CD8-positive, alpha-beta T cell (primary cell): ENCODE measurements at regions of chr9 and their contacts with region 1.

Region 1: DNA sequence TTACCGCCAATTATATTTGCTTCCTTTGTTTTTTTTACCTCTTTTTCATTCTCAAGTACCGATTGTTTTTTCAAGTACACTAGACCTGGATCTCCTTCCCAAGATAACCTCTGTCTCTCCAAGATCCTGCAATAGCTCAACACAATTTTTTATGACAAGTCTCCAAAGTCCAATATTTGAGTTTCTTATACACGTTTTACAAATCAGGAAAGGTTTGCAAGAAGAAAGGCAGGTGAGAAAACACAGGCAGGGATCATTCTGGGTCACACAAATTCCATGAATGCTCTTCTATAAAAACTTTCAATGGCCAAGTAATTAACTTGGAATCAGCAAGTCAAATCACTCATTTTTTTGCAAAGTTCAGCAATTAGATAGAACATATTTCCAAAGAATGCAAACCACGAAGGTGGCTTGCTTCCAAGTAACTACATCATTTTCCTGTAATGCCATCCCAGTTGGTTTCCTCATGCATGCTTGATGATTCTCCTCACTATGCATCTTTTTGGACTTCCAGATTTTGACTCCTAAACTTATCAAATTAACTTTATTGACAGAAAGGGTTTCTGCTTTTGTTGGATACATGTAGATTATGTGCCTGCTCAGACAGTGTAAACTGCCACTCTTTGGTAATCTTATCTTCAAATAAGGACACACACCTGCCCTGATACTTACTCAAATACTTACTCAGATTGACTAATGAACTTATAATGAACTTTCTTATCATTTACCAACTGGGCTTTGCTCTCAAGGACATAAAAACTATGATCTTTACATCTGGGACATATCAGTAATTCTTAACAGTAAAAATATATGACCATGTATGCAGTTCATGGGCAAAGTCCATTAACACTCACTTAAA is 24.7 kb upstream of the IFNE start:
- DNase-seq: no peak
- ATAC-seq: no peak
- H3K4me3 ChIP-seq: no peak overlapping the region
- H3K4me3 Mint-ChIP-seq: no peak overlapping the region
- H3K27ac ChIP-seq: no peak overlapping the region
- H3K27ac Mint-ChIP-seq: no peak overlapping the region
- H3K4me1 ChIP-seq: peaks cover 14% of the 10 kb centered on the region
- H3K4me1 Mint-ChIP-seq: peaks cover 16% of the 10 kb centered on the region
- H3K27me3 ChIP-seq: no peaks in the 10 kb centered on the region
- H3K27me3 Mint-ChIP-seq: no peaks in the 10 kb centered on the region
- CTCF ChIP-seq: no peak

Region 2: GRCh38 chr9:21473236-21473635 is 33.6 kb before region 1 on chr9:
- CTCF ChIA-PET with region 1: no interaction called
- POLR2A ChIA-PET with region 1: no interaction called
- intact Hi-C with region 1: loop called in 1 of 2 experiments (anchors 5 kb)
- DNase-seq: no peak
- ATAC-seq: no peak
- H3K4me3 ChIP-seq: no peak overlapping the region
- H3K4me3 Mint-ChIP-seq: no peak overlapping the region
- H3K27ac ChIP-seq: no peak overlapping the region
- H3K27ac Mint-ChIP-seq: no peak overlapping the region
- H3K4me1 ChIP-seq: no peaks in the 10 kb centered on the region
- H3K4me1 Mint-ChIP-seq: no peaks in the 10 kb centered on the region
- H3K27me3 ChIP-seq: no peaks in the 10 kb centered on the region
- H3K27me3 Mint-ChIP-seq: peaks cover 8% of the 10 kb centered on the region
- CTCF ChIP-seq: no peak

Region 3: GRCh38 chr9:21715408-21715807 is 208.6 kb after region 1 on chr9:
- CTCF ChIA-PET with region 1: no interaction called
- POLR2A ChIA-PET with region 1: no interaction called
- intact Hi-C with region 1: no loop called
- DNase-seq: no peak
- ATAC-seq: no peak
- H3K4me3 ChIP-seq: no peak overlapping the region
- H3K4me3 Mint-ChIP-seq: no peak overlapping the region
- H3K27ac ChIP-seq: no peak overlapping the region
- H3K27ac Mint-ChIP-seq: no peak overlapping the region
- H3K4me1 ChIP-seq: no peaks in the 10 kb centered on the region
- H3K4me1 Mint-ChIP-seq: peaks cover 14% of the 10 kb centered on the region
- H3K27me3 ChIP-seq: no peaks in the 10 kb centered on the region
- H3K27me3 Mint-ChIP-seq: peaks cover 13% of the 10 kb centered on the region
- CTCF ChIP-seq: no peak